Psoas muscle (tissue), 8 donors: ENCODE measurements at regions of chr10 and their contacts with region 1.

Region 1: DNA sequence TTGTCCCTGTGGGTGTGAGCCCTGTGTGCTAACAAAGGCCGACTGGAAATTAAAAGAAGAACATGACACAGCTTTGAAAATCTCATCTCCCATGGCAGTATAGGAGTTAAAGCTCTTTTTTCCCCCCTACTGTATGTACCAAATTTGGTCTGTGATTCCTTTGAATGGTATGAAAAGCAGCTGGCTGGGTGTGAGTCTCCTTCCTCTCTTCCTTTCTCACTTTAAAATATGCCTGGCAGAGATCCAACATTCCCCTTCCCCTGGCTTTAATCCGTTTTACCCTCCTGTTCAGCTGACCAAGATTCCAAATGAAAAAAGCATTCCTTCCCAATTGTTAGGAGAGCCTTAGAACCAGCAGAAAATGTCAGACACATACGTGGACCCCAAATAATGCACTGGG is 225.0 kb upstream of the CELF2 start:
- DNase-seq: no peak
- ATAC-seq: no peak
- H3K4me3 ChIP-seq: no peak overlapping the region
- H3K27ac ChIP-seq: no peak overlapping the region
- H3K4me1 ChIP-seq: peaks cover 8% of the 10 kb centered on the region
- H3K27me3 ChIP-seq: peaks cover 0 to 4% (median 0%) of the 10 kb centered on the region in 3 donors
- CTCF ChIP-seq: no peak

Region 2: DNA sequence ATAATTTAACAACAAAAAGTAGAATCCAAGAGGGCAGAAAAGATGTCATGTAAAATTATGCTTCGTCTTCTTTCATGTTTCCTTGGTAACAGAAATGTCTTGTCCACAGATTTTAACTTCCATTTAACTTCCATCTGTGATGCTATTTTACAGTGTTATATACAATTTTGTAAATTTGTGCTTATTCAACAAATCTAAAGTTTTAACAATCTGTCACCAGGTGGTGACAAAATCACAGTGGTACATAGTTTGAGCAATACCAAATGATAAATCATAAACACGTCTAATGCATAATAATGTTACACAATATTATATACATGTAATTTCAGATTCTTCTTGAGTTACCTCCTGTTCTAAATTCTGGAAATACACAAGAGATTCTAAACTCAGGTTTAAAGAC is 559.5 kb before region 1 on chr10:
- intact Hi-C with region 1: loop called in 1 of 2 experiments (anchors 5 kb)
- DNase-seq: no peak
- ATAC-seq: no peak
- H3K4me3 ChIP-seq: no peak overlapping the region
- H3K27ac ChIP-seq: no peak overlapping the region
- H3K4me1 ChIP-seq: no peaks in the 10 kb centered on the region
- H3K27me3 ChIP-seq: no peaks in the 10 kb centered on the region
- CTCF ChIP-seq: no peak

Region 3: DNA sequence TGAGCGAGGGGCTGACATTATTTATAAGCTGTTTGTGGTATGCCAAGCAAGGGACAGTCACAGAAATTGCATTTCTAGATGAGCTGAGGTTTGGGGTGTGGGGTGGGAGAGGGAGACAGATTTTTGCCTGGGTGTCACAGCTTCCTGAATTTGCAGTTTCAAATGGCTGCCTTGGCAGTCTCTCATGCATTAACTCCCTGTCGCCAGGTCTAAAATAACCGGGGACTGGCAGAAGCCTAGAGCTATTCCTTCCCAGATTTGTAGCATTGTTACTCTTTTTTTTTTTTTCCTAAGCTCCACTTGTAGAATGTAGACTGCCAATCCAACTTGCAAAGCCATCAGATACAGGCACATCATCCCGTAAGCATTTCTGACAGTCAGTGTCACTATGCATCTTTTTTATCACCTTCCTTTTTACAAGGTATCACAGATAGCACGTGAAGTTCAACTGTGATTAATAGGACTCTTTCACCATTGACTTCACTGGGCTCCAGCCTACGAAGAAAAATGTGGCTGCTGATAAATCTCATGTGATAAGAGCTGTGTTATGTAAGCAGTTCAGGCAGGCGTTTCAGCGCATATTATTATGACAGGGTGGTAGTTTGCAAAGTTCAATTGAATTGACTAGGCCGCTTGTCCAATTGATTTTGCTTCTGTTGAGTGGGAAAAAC is 94.3 kb after region 1 on chr10:
- intact Hi-C with region 1: loop called in 1 of 2 experiments (anchors 10 kb)
- DNase-seq: no peak
- ATAC-seq: peak in 2 of 4 donors; percentile 15 to 23
- H3K4me3 ChIP-seq: no peak overlapping the region
- H3K27ac ChIP-seq: no peak overlapping the region
- H3K4me1 ChIP-seq: peaks cover 9% of the 10 kb centered on the region
- H3K27me3 ChIP-seq: no peaks in the 10 kb centered on the region
- CTCF ChIP-seq: no peak